IMR-90 (cell line): ENCODE measurements at regions of chr1 and their contacts with region 1.

Region 1: DNA sequence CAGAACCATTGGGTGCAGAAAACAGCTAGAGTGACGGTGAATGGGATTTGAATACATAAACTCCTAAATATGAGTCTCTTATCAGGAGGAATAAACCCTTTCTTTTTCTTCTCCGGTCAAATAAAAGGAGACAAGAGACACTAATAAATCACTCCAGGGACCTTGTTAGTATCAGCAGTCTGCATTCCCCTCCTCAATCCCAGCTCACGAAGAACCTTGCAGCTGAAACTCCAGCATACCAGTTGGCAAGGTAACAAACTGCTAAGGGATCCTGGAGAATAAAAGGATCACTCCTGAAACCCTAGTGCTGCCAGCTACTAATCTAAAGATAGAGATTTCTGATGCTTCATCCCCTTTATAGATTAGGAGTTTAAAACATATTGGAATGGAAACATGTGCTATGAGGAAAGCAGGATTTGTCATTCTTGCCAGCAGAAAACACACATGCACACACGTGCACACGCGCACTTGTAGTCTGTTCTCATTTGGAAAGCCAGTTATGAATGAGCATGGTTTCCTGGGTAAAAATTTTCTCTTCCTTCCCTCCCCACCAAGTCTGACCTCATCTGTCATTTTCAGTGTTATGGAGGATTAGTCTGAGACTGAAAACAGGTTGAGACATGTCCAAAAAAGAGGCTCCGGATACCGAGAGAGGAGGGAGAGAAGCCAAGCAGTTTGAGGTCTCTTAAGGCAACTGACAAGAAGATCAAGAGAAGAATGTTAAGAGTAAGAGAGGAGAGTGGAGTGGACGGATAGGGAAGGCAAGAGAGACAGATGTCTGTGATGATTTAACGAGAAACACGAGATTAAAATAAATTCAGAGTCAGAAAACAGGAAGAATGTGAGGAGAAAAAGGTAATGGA is 10.9 kb downstream of the IER5 start:
- DNase-seq: peak; percentile 47
- ATAC-seq: no peak
- H3K4me3 ChIP-seq: no peak overlapping the region
- H3K27ac ChIP-seq: peak overlapping the region; percentile 6; the same call in 1 of the 2 replicates
- H3K4me1 ChIP-seq: peaks cover 48% of the 10 kb centered on the region
- H3K27me3 ChIP-seq: no peaks in the 10 kb centered on the region
- CTCF ChIP-seq: no peak
- POLR2A ChIP-seq: no peak
- RAD21 ChIP-seq: no peak

Region 2: GRCh38 chr1:179447489-179447888 is 1651.9 kb before region 1 on chr1:
- CTCF ChIA-PET with region 1: no interaction called
- POLR2A ChIA-PET with region 1: no interaction called
- dilution Hi-C with region 1: no loop called
- in situ Hi-C with region 1: no loop called
- intact Hi-C with region 1: no loop called
- DNase-seq: peak; percentile 2
- ATAC-seq: no peak
- H3K4me3 ChIP-seq: no peak overlapping the region
- H3K27ac ChIP-seq: no peak overlapping the region
- H3K4me1 ChIP-seq: no peaks in the 10 kb centered on the region
- H3K27me3 ChIP-seq: no peaks in the 10 kb centered on the region
- CTCF ChIP-seq: 0 out of 2 replicates have a peak, but pooled peaks have one; percentile 5
- POLR2A ChIP-seq: no peak
- RAD21 ChIP-seq: no peak

Region 3: GRCh38 chr1:180680558-180681144 is 418.7 kb before region 1 on chr1:
- CTCF ChIA-PET with region 1: no interaction called
- POLR2A ChIA-PET with region 1: no interaction called
- dilution Hi-C with region 1: no loop called
- in situ Hi-C with region 1: no loop called
- intact Hi-C with region 1: no loop called
- DNase-seq: peak; percentile 82
- ATAC-seq: no peak; the same call in 1 of the 2 replicates
- H3K4me3 ChIP-seq: no peak overlapping the region
- H3K27ac ChIP-seq: no peak overlapping the region
- H3K4me1 ChIP-seq: no peaks in the 10 kb centered on the region; the same call in 1 of the 2 replicates
- H3K27me3 ChIP-seq: no peaks in the 10 kb centered on the region
- CTCF ChIP-seq: no peak
- POLR2A ChIP-seq: no peak
- RAD21 ChIP-seq: no peak

Region 4: GRCh38 chr1:181134543-181135362 is 35.4 kb after region 1 on chr1:
- CTCF ChIA-PET with region 1: interaction called, 3 read pairs
- POLR2A ChIA-PET with region 1: interaction called, 4 read pairs
- dilution Hi-C with region 1: no loop called
- in situ Hi-C with region 1: loop called (anchors 5 kb)
- intact Hi-C with region 1: no loop called
- DNase-seq: peak; percentile 77
- ATAC-seq: peak; percentile 56
- H3K4me3 ChIP-seq: no peak overlapping the region
- H3K27ac ChIP-seq: peak overlapping the region; percentile 98
- H3K4me1 ChIP-seq: peaks cover 23% of the 10 kb centered on the region
- H3K27me3 ChIP-seq: no peaks in the 10 kb centered on the region
- CTCF ChIP-seq: no peak
- POLR2A ChIP-seq: no peak
- RAD21 ChIP-seq: no peak

Region 5: GRCh38 chr1:181159451-181160140 is 60.2 kb after region 1 on chr1:
- CTCF ChIA-PET with region 1: no interaction called
- POLR2A ChIA-PET with region 1: interaction called, 11 read pairs
- dilution Hi-C with region 1: no loop called
- in situ Hi-C with region 1: no loop called
- intact Hi-C with region 1: no loop called
- DNase-seq: peak; percentile 55
- ATAC-seq: peak; percentile 51
- H3K4me3 ChIP-seq: no peak overlapping the region
- H3K27ac ChIP-seq: no peak overlapping the region
- H3K4me1 ChIP-seq: peaks cover 5% of the 10 kb centered on the region
- H3K27me3 ChIP-seq: no peaks in the 10 kb centered on the region
- CTCF ChIP-seq: no peak
- POLR2A ChIP-seq: no peak
- RAD21 ChIP-seq: no peak